Activated CD4-positive, alpha-beta T cell treated with anti-CD3 and anti-CD28 coated beads, Interleukin-2, amount 10 ng/mL, durations not matched to agents 24 days and 14 days (primary cell): ENCODE measurements at regions of chr19 and their contacts with region 1.

Region 1: GRCh38 chr19:39445265-39446111 is at the start of gene SUPT5H:
- DNase-seq: peak; percentile 99
- H3K4me3 Mint-ChIP-seq: peak within 1 kb of the TSS; percentile 98
- H3K27ac Mint-ChIP-seq: peak within 1 kb of the TSS; percentile 96
- H3K4me1 Mint-ChIP-seq: peaks cover 34% of the 10 kb centered on the region
- H3K27me3 Mint-ChIP-seq: no peaks in the 10 kb centered on the region
- total RNA-seq, gene SUPT5H: 186 and 187 TPM in 2 replicates

Region 2: DNA sequence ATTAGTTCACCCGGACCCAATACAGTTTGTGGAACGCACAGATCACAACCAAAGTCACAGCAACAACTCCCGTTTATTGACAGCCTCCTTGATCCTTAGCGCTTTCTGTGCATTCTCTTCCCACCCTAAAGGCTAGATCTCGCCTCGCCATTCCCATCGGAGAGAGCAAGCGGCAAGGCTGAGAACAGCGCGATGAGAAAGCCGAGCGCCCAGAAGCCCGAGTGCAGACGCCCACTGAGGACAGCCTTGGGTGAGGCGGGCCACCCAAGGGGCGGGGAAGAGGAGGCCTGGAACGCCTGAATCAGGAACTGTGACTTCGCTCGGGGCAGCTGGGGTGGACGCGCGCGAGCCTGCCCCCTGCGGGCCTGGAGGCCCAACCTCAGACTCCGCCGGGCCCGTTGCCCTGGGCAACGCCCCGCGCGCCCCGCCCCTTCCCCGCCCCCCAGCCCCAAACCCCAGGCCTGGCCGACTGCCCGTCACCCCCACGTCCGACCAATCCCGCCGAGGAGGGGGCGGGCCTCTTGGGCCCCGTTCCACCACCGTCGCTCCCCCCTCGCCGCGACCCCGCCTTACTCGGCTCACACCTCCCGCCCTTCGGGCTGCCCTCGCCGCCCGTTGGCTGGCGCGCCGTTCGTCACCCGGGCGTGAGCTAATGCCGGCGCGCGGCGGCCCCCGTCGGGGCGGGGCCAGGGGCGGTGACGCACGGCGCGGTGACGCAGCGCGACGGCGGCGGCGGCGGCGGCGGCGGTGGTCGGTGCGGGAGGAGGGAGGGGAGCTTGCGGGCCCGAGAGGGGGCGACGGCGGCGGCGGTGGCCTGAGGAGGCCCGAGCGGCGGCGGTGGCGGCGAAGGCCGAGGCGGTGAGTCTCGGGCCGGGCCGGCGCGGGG is 103.5 kb before region 1 on chr19 and contains the start of gene SAMD4B:
- intact Hi-C with region 1: loop called (anchors 5 kb)
- DNase-seq: peak; percentile 100
- H3K4me3 Mint-ChIP-seq: peak within 1 kb of the TSS; percentile 91
- H3K27ac Mint-ChIP-seq: peak within 1 kb of the TSS; percentile 90
- H3K4me1 Mint-ChIP-seq: peaks cover 68% of the 10 kb centered on the region
- H3K27me3 Mint-ChIP-seq: no peaks in the 10 kb centered on the region
- total RNA-seq, gene SAMD4B: 68.9 and 71.4 TPM in 2 replicates

Region 3: DNA sequence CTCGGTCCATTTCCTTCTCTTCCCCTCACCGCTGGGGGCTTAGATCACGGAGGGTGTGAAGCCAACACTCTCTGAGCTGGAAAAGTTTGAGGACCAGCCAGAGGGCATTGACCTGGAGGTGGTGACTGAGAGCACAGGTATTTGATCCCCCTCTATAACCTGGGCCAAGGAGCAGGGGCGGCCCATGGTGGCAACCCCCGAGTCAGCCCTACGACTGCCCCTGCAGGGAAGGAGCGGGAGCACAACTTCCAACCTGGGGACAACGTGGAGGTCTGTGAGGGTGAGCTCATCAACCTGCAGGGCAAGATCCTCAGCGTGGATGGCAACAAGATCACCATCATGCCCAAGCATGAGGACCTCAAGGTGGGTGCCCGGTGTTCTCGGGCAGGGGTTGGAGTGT is 23.5 kb after region 1 on chr19:
- intact Hi-C with region 1: no loop called
- DNase-seq: no peak
- H3K4me3 Mint-ChIP-seq: no peak overlapping the region
- H3K27ac Mint-ChIP-seq: no peak overlapping the region
- H3K4me1 Mint-ChIP-seq: peaks cover 16% of the 10 kb centered on the region
- H3K27me3 Mint-ChIP-seq: no peaks in the 10 kb centered on the region

Region 4: GRCh38 chr19:39480337-39481228 is 35.1 kb after region 1 on chr19 and contains the start of gene TIMM50:
- intact Hi-C with region 1: loop called (anchors 1 kb)
- DNase-seq: peak; percentile 99
- H3K4me3 Mint-ChIP-seq: peak within 1 kb of the TSS; percentile 92
- H3K27ac Mint-ChIP-seq: peak within 1 kb of the TSS; percentile 94
- H3K4me1 Mint-ChIP-seq: peaks cover 21% of the 10 kb centered on the region
- H3K27me3 Mint-ChIP-seq: no peaks in the 10 kb centered on the region
- total RNA-seq, gene TIMM50: 141 and 143 TPM in 2 replicates

Region 5: DNA sequence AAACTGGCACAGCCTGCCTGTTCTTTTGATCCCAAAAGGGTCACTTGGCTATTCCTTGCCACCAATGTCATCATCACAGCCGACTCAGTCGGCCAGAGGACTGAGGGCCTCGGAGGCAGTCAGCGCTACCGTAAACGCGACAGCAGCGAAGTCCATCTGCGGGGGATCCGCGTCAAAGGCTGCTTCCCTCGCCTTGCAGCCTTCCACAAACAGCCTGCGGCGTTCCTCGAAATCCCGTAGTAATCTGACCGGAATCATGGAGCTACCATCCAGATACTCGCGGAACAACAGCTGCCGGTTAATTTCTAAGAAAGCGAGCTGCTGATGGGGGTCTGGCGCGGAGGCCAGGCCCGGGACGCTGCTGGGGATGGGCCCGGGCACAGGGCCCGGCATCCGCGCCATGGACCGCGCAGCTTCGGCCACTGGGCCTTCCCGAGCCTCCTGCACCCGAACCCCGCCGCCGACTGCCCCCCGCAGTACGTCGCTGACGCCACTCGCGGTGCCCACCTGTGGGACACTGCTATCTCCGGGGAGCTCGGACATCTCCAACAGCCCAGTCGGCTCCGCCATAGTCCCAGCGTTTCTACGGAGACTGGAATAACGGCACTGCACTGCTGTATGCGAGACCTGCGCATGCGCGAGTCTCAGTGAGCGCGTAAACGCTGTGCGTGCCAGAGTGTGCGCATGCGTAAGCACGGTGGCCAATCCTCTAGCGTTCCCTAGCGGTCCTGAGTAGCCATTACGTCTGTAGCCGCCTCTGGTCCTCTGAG is 86.9 kb after region 1 on chr19 and contains the start of gene EID2B:
- intact Hi-C with region 1: loop called (anchors 1 kb)
- DNase-seq: peak; percentile 98
- H3K4me3 Mint-ChIP-seq: peak within 1 kb of the TSS; percentile 93
- H3K27ac Mint-ChIP-seq: peak within 1 kb of the TSS; percentile 90
- H3K4me1 Mint-ChIP-seq: peaks cover 19% of the 10 kb centered on the region
- H3K27me3 Mint-ChIP-seq: no peaks in the 10 kb centered on the region
- total RNA-seq, gene EID2B: 3.4 and 3.6 TPM in 2 replicates

Region 6: DNA sequence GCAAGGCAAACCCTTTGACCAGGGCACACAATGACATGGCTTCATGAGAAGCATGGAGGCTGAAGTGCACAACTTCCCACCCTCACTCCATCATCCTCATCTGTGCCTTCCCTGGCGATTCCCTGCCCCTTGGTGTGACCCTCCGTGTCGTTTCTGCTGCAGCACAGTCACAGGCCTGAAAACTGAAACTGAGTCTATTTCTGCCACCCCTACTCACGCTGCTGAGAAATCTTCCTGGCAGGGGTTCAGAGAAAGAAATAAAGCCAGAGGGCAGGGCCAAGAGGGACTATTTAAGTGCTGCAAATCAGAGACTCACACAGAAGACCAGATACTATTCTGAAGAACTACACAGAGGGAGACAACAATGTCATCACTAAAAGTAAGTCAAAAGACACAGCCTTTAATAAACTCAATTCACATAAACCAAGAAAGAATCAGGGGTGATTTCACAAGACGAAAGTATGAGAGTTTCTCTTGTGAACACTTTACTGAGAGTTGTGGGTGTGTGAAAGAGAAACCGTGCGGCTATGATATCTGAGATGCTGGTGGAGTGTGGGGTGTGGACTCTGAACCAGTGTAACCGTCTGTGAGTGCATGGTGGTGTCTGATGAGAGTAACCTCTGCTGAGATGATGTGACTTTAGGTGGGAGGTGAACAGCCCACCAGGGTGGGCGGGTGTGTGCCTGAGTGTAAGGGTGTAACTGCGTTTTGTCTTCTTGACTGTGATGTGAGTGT is 233.7 kb after region 1 on chr19:
- intact Hi-C with region 1: loop called (anchors 2 kb)
- DNase-seq: peak; percentile 83
- H3K4me3 Mint-ChIP-seq: peak overlapping the region; percentile 76
- H3K27ac Mint-ChIP-seq: peak overlapping the region; percentile 80
- H3K4me1 Mint-ChIP-seq: peaks cover 42% of the 10 kb centered on the region
- H3K27me3 Mint-ChIP-seq: no peaks in the 10 kb centered on the region